PC-9 (cell line): ENCODE measurements at regions of chr4 and their contacts with region 1.

Region 1: DNA sequence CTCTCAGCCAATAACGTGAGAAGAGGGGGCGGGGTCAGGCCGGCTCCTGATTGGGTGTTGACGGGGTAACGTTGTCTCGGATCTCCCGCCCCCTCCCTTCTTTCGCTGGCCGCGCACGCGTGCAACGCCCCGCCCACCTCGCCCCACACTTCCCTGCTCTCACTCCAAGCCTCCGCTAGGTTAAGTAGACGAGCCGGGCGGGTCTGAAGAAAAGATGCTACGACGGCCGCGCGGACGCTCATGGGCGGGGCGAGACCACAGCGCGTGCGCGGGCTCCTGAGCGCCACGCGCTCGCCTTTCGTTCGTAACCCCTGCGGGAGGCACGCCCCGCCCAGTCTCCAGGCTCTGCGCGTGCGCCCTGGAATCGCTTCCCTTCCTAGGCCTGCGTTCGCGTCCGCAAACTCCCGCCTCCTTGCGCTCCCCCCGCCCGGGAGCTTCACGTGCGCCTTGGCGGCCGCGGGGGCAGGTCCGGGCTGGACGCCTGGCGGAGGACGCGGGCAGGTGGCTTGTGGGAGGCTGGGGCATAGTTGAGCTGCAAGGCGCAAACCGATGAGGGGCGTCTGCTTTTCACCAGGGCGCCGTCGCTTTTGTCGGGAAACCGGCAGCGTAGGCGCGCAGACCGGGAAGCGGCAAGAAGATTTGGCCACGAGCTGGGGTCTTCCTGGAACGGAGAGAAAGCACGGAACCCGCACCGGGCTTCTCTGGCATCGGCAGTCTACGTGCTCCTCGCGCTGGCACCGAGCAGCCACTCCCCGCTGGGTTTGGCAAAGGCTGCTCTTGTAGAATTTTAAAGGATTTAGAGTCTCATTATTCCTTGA is 467 bp upstream of the PGRMC2 start:
- DNase-seq: peak; percentile 89 to 97
- H3K4me3 ChIP-seq: peak overlapping the region; percentile 87
- H3K27ac ChIP-seq: peak overlapping the region; percentile 88
- H3K4me1 ChIP-seq: peaks cover 28% of the 10 kb centered on the region
- H3K27me3 ChIP-seq: no peaks in the 10 kb centered on the region
- CTCF ChIP-seq: no peak; the same call in 1 of the 2 replicates

Region 2: GRCh38 chr4:127491571-127491970 is 796.5 kb before region 1 on chr4:
- CTCF ChIA-PET with region 1: no interaction called
- POLR2A ChIA-PET with region 1: no interaction called
- intact Hi-C with region 1: no loop called
- DNase-seq: no peak
- H3K4me3 ChIP-seq: no peak overlapping the region
- H3K27ac ChIP-seq: no peak overlapping the region
- H3K4me1 ChIP-seq: no peaks in the 10 kb centered on the region
- H3K27me3 ChIP-seq: no peaks in the 10 kb centered on the region
- CTCF ChIP-seq: no peak

Region 3: DNA sequence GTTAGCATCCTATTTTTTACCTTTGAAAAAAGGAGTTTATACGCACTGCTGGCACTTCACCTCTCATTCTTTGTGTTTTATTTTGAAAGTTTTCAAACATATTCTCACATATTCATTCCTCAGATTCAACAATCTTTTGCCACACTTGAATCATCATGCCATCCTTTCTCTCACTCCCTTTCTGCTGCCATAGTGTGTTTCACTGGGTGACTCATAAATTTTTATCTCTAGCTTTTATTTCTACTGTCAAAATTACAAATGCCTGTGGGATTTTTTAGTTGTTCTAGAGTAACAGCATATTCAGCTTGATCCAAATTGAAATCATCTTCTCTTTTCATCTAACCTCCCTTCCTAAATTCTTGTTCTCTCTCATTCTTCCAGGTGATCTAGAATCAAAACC is 351.1 kb before region 1 on chr4:
- CTCF ChIA-PET with region 1: no interaction called
- POLR2A ChIA-PET with region 1: interaction called, 19 read pairs
- intact Hi-C with region 1: no loop called
- DNase-seq: no peak
- H3K4me3 ChIP-seq: no peak overlapping the region
- H3K27ac ChIP-seq: no peak overlapping the region
- H3K4me1 ChIP-seq: no peaks in the 10 kb centered on the region
- H3K27me3 ChIP-seq: no peaks in the 10 kb centered on the region
- CTCF ChIP-seq: no peak

Region 4: GRCh38 chr4:128220286-128221235 is 67.5 kb before region 1 on chr4:
- CTCF ChIA-PET with region 1: no interaction called
- POLR2A ChIA-PET with region 1: interaction called, 20 read pairs
- intact Hi-C with region 1: no loop called
- DNase-seq: peak in 1 of 2 experiments; percentile 37
- H3K4me3 ChIP-seq: no peak overlapping the region
- H3K27ac ChIP-seq: no peak overlapping the region
- H3K4me1 ChIP-seq: no peaks in the 10 kb centered on the region
- H3K27me3 ChIP-seq: no peaks in the 10 kb centered on the region
- CTCF ChIP-seq: peak; percentile 51; the same call in 1 of the 2 replicates

Region 5: GRCh38 chr4:128271551-128271950 is 16.5 kb before region 1 on chr4:
- CTCF ChIA-PET with region 1: interaction called, 4 read pairs
- POLR2A ChIA-PET with region 1: interaction called, 10 read pairs
- intact Hi-C with region 1: no loop called
- DNase-seq: no peak
- H3K4me3 ChIP-seq: no peak overlapping the region
- H3K27ac ChIP-seq: no peak overlapping the region
- H3K4me1 ChIP-seq: no peaks in the 10 kb centered on the region
- H3K27me3 ChIP-seq: no peaks in the 10 kb centered on the region
- CTCF ChIP-seq: no peak

Region 6: GRCh38 chr4:128354205-128354821 is 66.2 kb after region 1 on chr4:
- CTCF ChIA-PET with region 1: no interaction called
- POLR2A ChIA-PET with region 1: interaction called, 12 read pairs
- intact Hi-C with region 1: loop called (anchors 1 kb)
- DNase-seq: peak; percentile 78 to 94
- H3K4me3 ChIP-seq: peak overlapping the region; percentile 19; the same call in 1 of the 2 replicates
- H3K27ac ChIP-seq: peak overlapping the region; percentile 90
- H3K4me1 ChIP-seq: peaks cover 43% of the 10 kb centered on the region
- H3K27me3 ChIP-seq: no peaks in the 10 kb centered on the region
- CTCF ChIP-seq: no peak

Region 7: GRCh38 chr4:128371001-128371777 is 83.1 kb after region 1 on chr4:
- CTCF ChIA-PET with region 1: no interaction called
- POLR2A ChIA-PET with region 1: no interaction called
- intact Hi-C with region 1: no loop called
- DNase-seq: no peak
- H3K4me3 ChIP-seq: no peak overlapping the region
- H3K27ac ChIP-seq: no peak overlapping the region
- H3K4me1 ChIP-seq: no peaks in the 10 kb centered on the region
- H3K27me3 ChIP-seq: no peaks in the 10 kb centered on the region
- CTCF ChIP-seq: no peak

Region 8: GRCh38 chr4:128528793-128529553 is 240.9 kb after region 1 on chr4:
- CTCF ChIA-PET with region 1: no interaction called
- POLR2A ChIA-PET with region 1: no interaction called
- intact Hi-C with region 1: loop called (anchors 5 kb)
- DNase-seq: peak; percentile 65 to 97
- H3K4me3 ChIP-seq: no peak overlapping the region
- H3K27ac ChIP-seq: peak overlapping the region; percentile 80
- H3K4me1 ChIP-seq: peaks cover 60% of the 10 kb centered on the region
- H3K27me3 ChIP-seq: no peaks in the 10 kb centered on the region
- CTCF ChIP-seq: no peak